Heart right ventricle (tissue), 16 donors: ENCODE measurements at regions of chr4 and their contacts with region 1.

Region 1: GRCh38 chr4:74311696-74312313 is 3.5 kb downstream of the EPGN start:
- DNase-seq: peak in 1 of 2 donors; percentile 36
- ATAC-seq: peak in 1 of 8 donors; percentile 42
- H3K4me3 ChIP-seq: no peak overlapping the region
- H3K27ac ChIP-seq: no peak overlapping the region
- H3K4me1 ChIP-seq: no peaks in the 10 kb centered on the region
- H3K27me3 ChIP-seq: no peaks in the 10 kb centered on the region
- CTCF ChIP-seq: peak; percentile 16 to 76 (median 68)

Region 2: DNA sequence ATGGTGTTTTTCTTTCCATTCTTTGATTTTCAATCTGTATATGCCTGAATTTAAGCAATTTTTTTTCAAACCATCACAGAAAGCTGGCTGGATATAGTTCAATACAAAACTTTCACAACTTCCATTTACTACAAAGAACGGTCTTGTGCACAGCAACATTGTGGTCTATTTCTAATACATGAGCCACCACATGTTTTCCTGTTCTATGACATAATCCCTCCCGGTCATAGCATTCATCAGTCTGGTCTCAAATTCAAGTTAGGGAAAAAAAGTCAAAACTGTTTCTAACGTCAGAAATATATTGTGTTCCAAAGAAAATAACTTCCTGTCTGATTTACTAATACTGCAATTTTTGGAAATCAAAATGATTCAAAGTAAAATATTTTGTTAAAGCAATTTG is 482.8 kb before region 1 on chr4:
- intact Hi-C with region 1: no loop called
- DNase-seq: no peak
- ATAC-seq: peak in 3 of 8 donors; percentile 49 to 77 (median 72)
- H3K4me3 ChIP-seq: no peak overlapping the region
- H3K27ac ChIP-seq: no peak overlapping the region
- H3K4me1 ChIP-seq: peaks cover 0 to 21% (median 0%) of the 10 kb centered on the region in 9 donors
- H3K27me3 ChIP-seq: no peaks in the 10 kb centered on the region
- CTCF ChIP-seq: no peak

Region 3: GRCh38 chr4:74189331-74190043 is 122.3 kb before region 1 on chr4:
- intact Hi-C with region 1: loop called (anchors 2 to 10 kb)
- DNase-seq: no peak
- ATAC-seq: no peak
- H3K4me3 ChIP-seq: no peak overlapping the region
- H3K27ac ChIP-seq: no peak overlapping the region
- H3K4me1 ChIP-seq: no peaks in the 10 kb centered on the region
- H3K27me3 ChIP-seq: no peaks in the 10 kb centered on the region
- CTCF ChIP-seq: peak; percentile 27 to 81 (median 76)

Region 4: GRCh38 chr4:74228691-74229640 is 82.8 kb before region 1 on chr4:
- intact Hi-C with region 1: loop called in 9 of 10 experiments (anchors 1 to 10 kb)
- DNase-seq: peak; percentile 48 to 65
- ATAC-seq: peak in 3 of 8 donors; percentile 52 to 70 (median 65)
- H3K4me3 ChIP-seq: no peak overlapping the region
- H3K27ac ChIP-seq: no peak overlapping the region
- H3K4me1 ChIP-seq: peaks cover 0 to 15% (median 7%) of the 10 kb centered on the region in 9 donors
- H3K27me3 ChIP-seq: no peaks in the 10 kb centered on the region
- CTCF ChIP-seq: peak; percentile 65 to 95 (median 80)

Region 5: GRCh38 chr4:74490736-74491135 is 178.9 kb after region 1 on chr4:
- intact Hi-C with region 1: no loop called
- DNase-seq: no peak
- ATAC-seq: no peak
- H3K4me3 ChIP-seq: no peak overlapping the region
- H3K27ac ChIP-seq: no peak overlapping the region
- H3K4me1 ChIP-seq: no peaks in the 10 kb centered on the region
- H3K27me3 ChIP-seq: no peaks in the 10 kb centered on the region
- CTCF ChIP-seq: no peak